BJ (cell line): ENCODE measurements at regions of chr4 and their contacts with region 1.

Region 1: DNA sequence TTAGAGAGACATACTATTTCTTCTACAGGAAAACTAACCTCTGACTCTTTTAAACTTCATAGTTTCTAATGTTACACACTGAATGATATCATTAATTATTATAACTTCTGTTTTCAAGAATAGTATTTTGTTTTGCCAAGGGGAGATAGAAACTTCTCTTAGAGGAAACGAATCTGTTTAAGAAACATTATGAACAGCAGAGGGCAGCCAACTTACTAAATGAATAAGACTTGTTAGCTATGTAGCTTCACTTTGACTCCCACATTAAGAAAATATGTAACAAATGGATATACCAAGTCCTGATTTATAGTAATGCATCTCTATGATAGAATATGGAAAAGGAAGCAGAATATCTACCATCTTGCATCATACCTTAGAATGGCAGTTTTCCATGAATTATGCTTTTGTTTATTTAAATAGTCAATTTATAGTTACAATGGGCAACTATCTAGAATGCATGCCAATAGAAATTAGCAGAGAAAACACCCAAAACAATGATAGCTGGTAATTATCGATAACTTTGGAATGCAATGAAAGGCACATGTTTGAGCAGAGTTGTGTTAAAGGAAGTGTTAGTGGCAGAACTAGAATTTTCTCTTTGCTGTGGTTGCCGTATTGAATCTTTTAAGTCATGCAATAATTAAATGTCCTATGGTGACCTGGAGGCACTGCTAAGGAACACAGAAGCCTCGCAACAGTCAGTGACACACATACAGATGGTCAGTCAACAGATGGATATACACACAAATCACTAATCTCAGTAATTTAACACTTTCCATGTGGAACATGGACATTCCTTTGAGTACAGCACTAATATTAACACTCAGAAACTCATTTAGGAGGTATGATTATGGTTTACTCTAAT is 105.7 kb upstream of the PDLIM3 start:
- DNase-seq: peak; percentile 12
- H3K4me3 ChIP-seq: no peak overlapping the region
- H3K27me3 ChIP-seq: peaks cover 6% of the 10 kb centered on the region
- CTCF ChIP-seq: peak; percentile 42

Region 2: GRCh38 chr4:185554365-185555126 is 86.5 kb before region 1 on chr4:
- CTCF ChIA-PET with region 1: no interaction called
- POLR2A ChIA-PET with region 1: no interaction called
- DNase-seq: no peak
- H3K4me3 ChIP-seq: no peak overlapping the region
- H3K27me3 ChIP-seq: no peaks in the 10 kb centered on the region; the same call in 1 of the 2 replicates
- CTCF ChIP-seq: no peak

Region 3: GRCh38 chr4:185833055-185833598 is 192.1 kb after region 1 on chr4:
- CTCF ChIA-PET with region 1: no interaction called
- POLR2A ChIA-PET with region 1: no interaction called
- DNase-seq: no peak
- H3K4me3 ChIP-seq: no peak overlapping the region
- H3K27me3 ChIP-seq: no peaks in the 10 kb centered on the region
- CTCF ChIP-seq: no peak

Region 4: DNA sequence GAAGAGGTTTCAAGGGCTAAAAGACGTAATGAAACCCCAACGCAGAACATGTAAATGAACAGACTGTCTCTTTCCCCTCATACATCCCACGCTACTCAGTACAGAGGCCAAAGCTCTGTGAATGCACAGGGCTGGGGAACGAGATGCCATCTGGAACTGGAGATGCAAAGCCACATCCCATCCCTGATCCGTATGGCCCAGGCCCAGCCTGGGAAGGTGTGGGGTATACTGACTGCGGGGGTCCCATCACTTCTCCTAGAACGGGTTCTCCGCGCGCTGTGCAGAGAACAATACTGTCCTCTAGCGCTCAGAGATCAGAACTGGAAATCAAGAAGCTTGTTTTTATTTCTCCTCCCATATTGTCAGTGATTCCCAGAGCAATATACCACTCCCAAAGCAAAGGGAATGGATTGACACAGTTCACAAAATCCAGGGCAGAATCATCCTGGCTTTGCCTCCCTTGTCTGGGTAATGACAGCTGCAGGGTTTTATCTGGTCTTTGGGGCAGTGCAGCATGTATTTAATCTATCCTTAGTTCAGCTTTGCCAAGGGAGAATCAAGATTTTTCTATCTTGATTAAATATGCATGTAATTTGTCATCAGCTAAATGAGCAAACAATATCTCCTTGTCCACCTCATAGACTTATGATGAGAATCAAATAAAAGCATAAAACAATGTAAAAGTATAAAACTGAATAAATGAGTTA is 380.6 kb after region 1 on chr4:
- CTCF ChIA-PET with region 1: interaction called, 88 read pairs
- POLR2A ChIA-PET with region 1: no interaction called
- DNase-seq: no peak
- H3K4me3 ChIP-seq: no peak overlapping the region
- H3K27me3 ChIP-seq: no peaks in the 10 kb centered on the region; the same call in 1 of the 2 replicates
- CTCF ChIP-seq: peak; percentile 88

Region 5: GRCh38 chr4:186029571-186030398 is 388.7 kb after region 1 on chr4:
- CTCF ChIA-PET with region 1: interaction called, 15 read pairs
- POLR2A ChIA-PET with region 1: no interaction called
- DNase-seq: peak; percentile 21
- H3K4me3 ChIP-seq: no peak overlapping the region
- H3K27me3 ChIP-seq: peaks cover 2% of the 10 kb centered on the region; the same call in 1 of the 2 replicates
- CTCF ChIP-seq: no peak

Region 6: GRCh38 chr4:186037692-186038658 is 396.9 kb after region 1 on chr4:
- CTCF ChIA-PET with region 1: interaction called, 62 read pairs
- POLR2A ChIA-PET with region 1: interaction called, 10 read pairs
- DNase-seq: peak; percentile 48
- H3K4me3 ChIP-seq: no peak overlapping the region
- H3K27me3 ChIP-seq: peaks cover 5% of the 10 kb centered on the region; the same call in 1 of the 2 replicates
- CTCF ChIP-seq: peak; percentile 69